ENCODE measurements at regions of chr2 and their contacts with region 1.

Region 1: DNA sequence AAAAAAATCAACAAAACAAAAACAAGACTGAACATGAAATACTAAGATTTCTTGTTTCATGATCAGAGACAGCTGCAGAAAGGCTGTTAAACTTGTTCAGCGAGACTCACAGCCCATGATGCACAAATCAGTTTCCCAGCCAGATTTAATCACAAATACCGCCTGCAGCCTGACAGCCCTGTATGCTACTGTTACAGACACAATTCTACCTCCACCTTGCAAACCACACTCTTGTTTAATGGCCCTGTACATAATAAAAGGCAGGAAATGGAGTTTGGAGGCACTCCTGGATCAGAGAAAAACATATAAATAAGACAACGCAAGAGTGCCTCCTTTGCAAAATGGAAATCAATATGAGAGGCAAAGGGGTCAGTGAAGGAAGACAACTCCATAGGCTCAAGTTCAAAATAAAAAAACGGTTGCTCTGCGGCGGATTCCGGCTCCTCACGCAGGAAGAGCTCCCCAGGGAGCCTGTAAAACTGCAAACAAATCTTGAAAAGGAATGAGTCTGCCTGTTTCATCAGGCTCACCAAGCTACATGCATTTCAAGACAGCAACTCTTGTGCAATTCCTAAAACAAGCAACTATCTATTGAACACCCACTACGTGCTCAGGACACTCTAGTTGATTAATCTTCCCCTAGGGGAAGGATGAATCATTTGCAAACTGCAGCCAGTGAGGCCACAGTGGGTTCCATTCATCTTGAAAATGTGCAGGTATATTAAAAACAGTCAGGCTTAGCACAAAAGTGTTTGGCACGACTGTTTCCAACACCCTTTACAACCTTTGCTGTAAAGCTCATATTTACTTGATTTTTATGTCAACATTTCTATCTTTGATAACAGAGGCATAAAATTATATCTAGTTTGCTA is 37.5 kb downstream of the TBC1D8 start:
- H3K4me3 Mint-ChIP-seq: no peak overlapping the region
- H3K27ac Mint-ChIP-seq: peak overlapping the region; percentile 60
- H3K4me1 Mint-ChIP-seq: peaks cover 50% of the 10 kb centered on the region
- H3K27me3 Mint-ChIP-seq: no peaks in the 10 kb centered on the region

Region 2: DNA sequence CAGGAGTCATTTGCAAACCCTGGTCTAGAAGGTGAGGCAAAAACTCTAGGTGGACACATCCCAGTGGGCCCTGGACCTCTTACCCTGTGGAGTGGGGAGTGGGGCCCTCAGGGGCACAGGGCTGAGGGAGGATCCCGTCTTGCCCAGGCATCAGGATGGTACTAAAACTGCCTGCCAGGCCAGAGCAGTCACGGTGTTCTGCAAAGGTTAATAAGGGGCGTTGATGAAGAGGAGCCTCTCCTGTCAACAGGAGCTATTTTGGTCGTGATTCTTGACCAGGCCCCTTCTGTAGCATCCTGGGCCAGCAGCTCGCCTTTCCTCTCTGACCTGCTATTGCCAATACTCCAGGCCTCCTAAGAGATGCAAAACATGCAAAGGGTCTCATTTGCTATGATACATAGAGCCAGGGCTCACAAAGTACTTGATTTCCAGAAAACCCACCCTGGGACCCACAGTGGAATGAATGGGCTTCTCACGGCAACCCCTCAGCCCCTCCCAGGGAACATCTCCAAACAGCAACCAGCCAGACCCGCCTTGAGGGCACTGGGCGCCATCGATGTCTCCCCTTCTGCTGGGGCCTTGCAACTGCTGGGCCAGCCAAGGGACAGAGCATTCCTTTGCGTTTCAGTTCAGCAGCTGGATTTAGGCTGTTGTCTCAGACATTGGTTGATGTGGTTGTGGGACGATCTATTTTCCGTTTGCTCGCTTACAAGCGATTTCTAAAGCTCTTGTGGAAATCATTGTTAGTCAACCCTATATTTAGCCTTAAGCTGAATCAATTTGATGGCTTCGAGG is 439.7 kb before region 1 on chr2:
- intact Hi-C with region 1: no loop called
- H3K4me3 Mint-ChIP-seq: no peak overlapping the region
- H3K27ac Mint-ChIP-seq: no peak overlapping the region
- H3K4me1 Mint-ChIP-seq: no peaks in the 10 kb centered on the region
- H3K27me3 Mint-ChIP-seq: peaks cover 7% of the 10 kb centered on the region

Region 3: GRCh38 chr2:101012706-101013181 is 100.9 kb before region 1 on chr2:
- intact Hi-C with region 1: loop called (anchors 10 kb)
- H3K4me3 Mint-ChIP-seq: no peak overlapping the region
- H3K27ac Mint-ChIP-seq: peak overlapping the region; percentile 39
- H3K4me1 Mint-ChIP-seq: peaks cover 34% of the 10 kb centered on the region
- H3K27me3 Mint-ChIP-seq: no peaks in the 10 kb centered on the region

Region 4: GRCh38 chr2:101124643-101125366 is 11.2 kb after region 1 on chr2:
- intact Hi-C with region 1: loop called (anchors 1 kb)
- H3K4me3 Mint-ChIP-seq: no peak overlapping the region
- H3K27ac Mint-ChIP-seq: no peak overlapping the region
- H3K4me1 Mint-ChIP-seq: peaks cover 49% of the 10 kb centered on the region
- H3K27me3 Mint-ChIP-seq: no peaks in the 10 kb centered on the region

Region 5: DNA sequence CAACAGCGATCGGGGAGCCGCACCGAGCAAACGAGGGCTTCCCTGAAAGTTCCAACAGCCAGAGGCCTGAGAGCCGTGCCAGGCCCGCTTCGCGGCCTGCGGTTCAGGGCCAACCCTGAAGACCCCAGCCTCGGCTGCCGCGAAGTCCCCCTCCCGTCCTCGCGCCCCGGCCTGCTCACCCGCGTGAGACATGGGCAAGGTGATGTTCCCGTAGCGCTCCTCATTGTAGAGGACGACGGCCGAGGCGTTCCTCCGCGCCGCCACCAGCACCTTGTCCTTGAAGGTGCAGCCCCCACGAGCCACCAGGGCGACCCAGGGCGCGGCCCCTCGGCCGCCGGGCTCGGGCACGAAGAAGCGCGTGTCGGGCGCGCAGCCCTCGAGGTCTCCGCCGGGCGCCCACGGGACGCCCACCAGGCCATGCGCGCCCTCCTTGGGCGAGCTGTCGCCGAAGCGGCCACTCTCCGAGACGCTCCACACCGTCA is 194.4 kb after region 1 on chr2:
- intact Hi-C with region 1: no loop called
- H3K4me3 Mint-ChIP-seq: peak overlapping the region; percentile 85
- H3K27ac Mint-ChIP-seq: peak overlapping the region; percentile 87
- H3K4me1 Mint-ChIP-seq: peaks cover 57% of the 10 kb centered on the region
- H3K27me3 Mint-ChIP-seq: no peaks in the 10 kb centered on the region

Measured in dendritic cell treated with granulocyte-macrophage colony-stimulating factor and Interleukin-4, amounts not matched to agents 40 ng/mL and 50 ng/mL, for 4 days (primary cell).